Posterior vena cava (tissue), 2 donors: ENCODE measurements at regions of chr2 and their contacts with region 1.

Region 1: GRCh38 chr2:161625314-161625919 is 1.2 kb downstream of the SLC4A10 start:
- DNase-seq: no peak

Region 2: GRCh38 chr2:161609930-161610329 is 15.5 kb before region 1 on chr2:
- intact Hi-C with region 1: loop called in 1 of 2 experiments (anchors 1 kb)
- DNase-seq: no peak